ENCODE measurements at regions of chr1 and their contacts with region 1.

Region 1: DNA sequence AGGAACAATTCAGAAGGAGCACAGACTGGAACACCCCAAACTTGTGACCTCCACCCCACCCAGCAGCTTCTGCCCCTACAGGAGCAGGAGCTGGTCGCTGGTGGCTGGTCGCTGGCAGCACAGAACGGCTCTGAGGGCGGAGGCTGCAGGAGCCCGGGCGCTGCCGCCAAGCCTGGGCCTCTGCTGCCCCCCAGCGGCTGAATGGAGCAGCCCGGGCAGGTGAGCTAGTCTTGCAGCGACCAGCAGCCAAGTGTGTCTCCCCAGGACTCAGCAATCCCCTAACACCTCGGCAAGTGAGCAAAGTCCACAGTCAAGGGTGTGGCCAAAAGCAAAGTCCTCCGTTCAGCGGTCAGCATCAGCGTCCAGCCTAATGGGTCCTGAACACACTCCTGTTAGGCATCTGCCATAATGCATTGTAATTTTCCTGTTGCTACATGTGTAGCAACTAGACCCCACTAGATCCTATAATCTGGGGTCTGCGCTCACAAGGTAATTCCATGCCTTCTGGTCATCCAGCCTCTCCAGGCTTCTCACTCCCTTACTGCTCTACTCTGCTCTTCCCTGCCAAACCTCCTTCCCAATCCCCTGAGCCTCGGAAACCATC is 12.1 kb upstream of the GJB5 start:
- DNase-seq: peak; percentile 83
- ATAC-seq: peak; percentile 88 to 90

Region 2: DNA sequence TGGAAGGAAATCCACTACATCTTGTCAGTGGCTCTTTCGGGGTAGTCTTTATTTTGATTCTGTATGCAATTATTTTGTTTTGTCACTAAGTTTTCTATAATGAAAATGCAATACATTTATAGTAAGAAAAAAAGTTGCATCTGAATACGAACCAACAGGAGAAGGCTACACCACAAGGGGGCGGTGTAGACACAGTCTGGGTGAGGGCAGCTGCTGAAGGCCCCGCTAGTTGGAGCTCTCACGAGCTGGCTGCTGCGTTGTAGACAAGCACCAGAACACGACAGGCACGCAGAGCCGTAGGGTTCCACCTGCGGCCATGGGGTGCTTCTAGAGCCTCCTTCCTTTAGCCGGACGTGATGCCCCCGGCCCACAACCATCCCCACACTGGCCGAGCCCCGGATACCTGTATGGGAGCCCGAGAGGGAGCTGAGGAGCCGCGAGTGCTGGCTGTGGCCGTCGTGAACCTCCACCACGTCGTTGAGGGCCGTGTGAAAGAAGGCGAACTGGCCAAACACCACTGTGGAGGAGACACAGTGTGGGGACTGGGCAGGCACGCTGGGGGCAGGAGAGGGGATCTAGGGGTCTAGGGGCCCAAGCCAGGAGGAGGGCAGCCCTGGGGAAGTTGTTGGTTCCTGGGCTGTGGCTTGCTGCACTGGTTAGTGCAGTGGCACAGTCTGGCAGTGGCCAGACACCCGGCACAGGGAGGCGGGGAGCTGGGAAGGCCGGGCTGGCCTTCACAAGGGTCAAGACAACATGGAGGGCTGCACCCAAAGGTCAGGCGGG is 1109.6 kb before region 1 on chr1:
- intact Hi-C with region 1: loop called in 1 of 2 experiments (anchors 5 kb)
- DNase-seq: peak; percentile 92
- ATAC-seq: peak; percentile 86 to 88

Region 3: DNA sequence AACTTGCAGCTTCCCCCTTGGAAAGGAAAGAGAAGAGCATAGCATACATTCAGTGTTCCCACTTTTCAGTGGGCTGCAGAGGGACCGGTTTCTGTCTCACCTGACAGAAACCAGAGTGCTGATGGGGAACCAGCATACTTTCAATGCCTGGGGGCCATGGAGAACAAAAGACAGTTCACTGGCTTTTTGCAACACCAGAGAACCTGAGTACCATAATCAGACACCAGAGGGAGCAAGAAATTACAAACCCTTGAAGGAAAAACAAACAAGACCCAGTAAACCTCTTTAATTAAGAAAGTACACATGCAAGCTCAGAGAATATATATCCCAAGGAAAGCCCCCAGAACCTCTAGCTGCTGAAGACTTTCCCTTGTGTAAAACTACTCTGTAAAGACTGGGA is 628.9 kb before region 1 on chr1:
- intact Hi-C with region 1: loop called (anchors 5 to 10 kb)
- DNase-seq: no peak
- ATAC-seq: no peak

Region 4: DNA sequence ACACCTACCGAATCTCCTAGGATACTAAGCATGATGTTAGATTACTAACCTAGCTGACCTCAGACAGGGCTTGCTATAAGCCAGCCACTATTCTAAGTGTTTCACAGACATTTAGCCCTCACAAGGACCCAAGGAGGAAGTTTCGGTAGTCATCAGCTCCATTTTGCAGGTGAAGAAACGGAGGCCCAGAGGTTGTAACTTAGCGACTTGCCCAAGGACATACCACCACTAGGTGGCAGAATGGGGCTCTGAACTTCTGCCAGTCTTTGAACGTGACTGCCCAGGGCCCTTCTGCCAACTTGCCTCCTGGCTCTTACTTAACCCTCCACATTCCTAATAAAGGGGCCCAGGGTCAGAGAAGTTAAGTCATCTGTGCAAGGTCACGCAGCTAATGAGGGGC is 282.6 kb before region 1 on chr1:
- intact Hi-C with region 1: loop called in 1 of 2 experiments (anchors 10 kb)
- DNase-seq: peak; percentile 34
- ATAC-seq: peak in 1 of 2 donors; percentile 23

Region 5: DNA sequence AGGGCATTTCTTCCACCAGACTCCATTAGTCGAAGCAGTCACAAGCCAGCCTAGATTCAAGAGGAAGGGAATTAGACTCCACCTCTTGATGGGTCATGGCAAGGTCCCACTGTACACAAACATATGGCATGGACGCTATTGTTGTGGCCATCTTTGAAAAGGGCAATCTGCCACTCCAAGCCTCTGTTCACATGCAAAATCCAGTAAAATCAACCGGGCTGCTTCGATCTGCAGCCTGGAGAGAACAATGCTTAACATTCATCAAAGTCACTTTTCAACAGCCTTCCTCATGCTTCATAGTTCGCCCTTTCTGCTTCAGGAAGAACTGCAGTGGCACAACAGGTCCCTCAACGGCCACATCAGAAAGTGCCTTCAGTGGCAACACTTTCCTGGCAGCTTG is 15.9 kb before region 1 on chr1:
- intact Hi-C with region 1: no loop called
- DNase-seq: no peak
- ATAC-seq: no peak